ENCODE measurements at regions of chr2 and their contacts with region 1.

Region 1: GRCh38 chr2:57602733-57603132 is 443.9 kb upstream of the VRK2 start:
- DNase-seq: no peak
- ATAC-seq: peak; percentile 67
- H3K4me3 ChIP-seq: no peak overlapping the region
- H3K27ac ChIP-seq: no peak overlapping the region
- H3K4me1 ChIP-seq: no peaks in the 10 kb centered on the region
- H3K27me3 ChIP-seq: no peaks in the 10 kb centered on the region
- CTCF ChIP-seq: no peak
- EP300 ChIP-seq: no peak
- POLR2A ChIP-seq: no peak
- RAD21 ChIP-seq: no peak

Region 2: GRCh38 chr2:57615855-57616556 is 13.3 kb after region 1 on chr2:
- CTCF ChIA-PET with region 1: interaction called, 3 read pairs
- POLR2A ChIA-PET with region 1: no interaction called
- RAD21 ChIA-PET with region 1: interaction called, 6 read pairs
- SMC1A ChIA-PET with region 1: interaction called, 11 read pairs
- in situ Hi-C with region 1: no loop called
- intact Hi-C with region 1: no loop called
- DNase-seq: no peak
- ATAC-seq: peak; percentile 44
- H3K4me3 ChIP-seq: no peak overlapping the region
- H3K27ac ChIP-seq: no peak overlapping the region
- H3K4me1 ChIP-seq: no peaks in the 10 kb centered on the region
- H3K27me3 ChIP-seq: no peaks in the 10 kb centered on the region
- CTCF ChIP-seq: no peak
- EP300 ChIP-seq: no peak
- POLR2A ChIP-seq: no peak
- RAD21 ChIP-seq: no peak

Measured in GM12878 (cell line).